ENCODE measurements at regions of chr7 and their contacts with region 1.

Region 1: DNA sequence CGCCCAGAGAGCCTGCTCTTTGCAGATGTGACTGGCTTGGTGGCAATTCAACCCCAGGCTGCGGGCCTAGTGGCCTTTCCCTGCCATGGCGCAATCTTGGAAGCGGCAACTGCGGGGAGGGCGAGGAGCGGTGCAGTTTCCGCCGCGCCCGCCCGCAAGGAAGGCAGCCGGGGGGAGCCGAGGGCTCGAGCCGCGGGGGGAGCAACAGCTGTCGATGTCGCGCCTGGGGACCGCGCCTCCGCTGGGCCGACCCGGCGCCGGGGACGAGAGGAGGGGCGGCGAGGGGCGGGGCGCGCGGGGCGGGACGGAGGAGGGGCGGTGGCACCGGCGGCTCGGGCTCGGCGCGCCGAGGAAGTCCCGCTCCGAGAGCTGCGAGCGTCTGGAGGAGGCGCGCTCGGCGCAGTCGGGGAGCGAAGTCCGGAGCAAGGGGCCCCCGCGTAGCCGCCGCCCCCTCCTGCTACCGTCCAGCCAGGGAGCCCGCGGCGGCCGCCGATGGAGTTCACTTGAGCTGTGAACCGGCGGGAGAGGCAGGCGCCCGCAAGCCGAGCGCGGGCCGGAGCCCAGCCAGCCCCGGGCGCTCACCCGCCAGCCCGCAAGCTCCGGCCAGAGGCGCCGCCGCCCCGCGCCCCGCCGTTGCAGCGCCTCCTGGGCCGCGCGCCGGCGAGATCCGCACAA is 438.1 kb upstream of the GALNT17 start:
- DNase-seq: peak; percentile 96
- H3K4me3 ChIP-seq: peak overlapping the region; percentile 79 to 97
- H3K27ac ChIP-seq: peak overlapping the region in 1 of 2 experiments; percentile 87; a peak in 2 of 4 replicates
- H3K4me1 ChIP-seq: peaks cover 9 to 30% of the 10 kb centered on the region in 2 experiments; a peak in 3 of 4 replicates
- H3K27me3 ChIP-seq: no peaks in the 10 kb centered on the region
- CTCF ChIP-seq: peak; percentile 42
- EP300 ChIP-seq: no peak; a peak in 2 of 4 replicates
- RAD21 ChIP-seq: no peak

Region 2: GRCh38 chr7:70040970-70041766 is 652.7 kb before region 1 on chr7:
- CTCF ChIA-PET with region 1: interaction called, 119 read pairs
- POLR2A ChIA-PET with region 1: no interaction called
- DNase-seq: no peak
- H3K4me3 ChIP-seq: no peak overlapping the region
- H3K27ac ChIP-seq: peak overlapping the region in 1 of 2 experiments; percentile 62; a peak in 1 of 4 replicates
- H3K4me1 ChIP-seq: peaks cover 28 to 55% of the 10 kb centered on the region in 2 experiments
- H3K27me3 ChIP-seq: no peaks in the 10 kb centered on the region
- CTCF ChIP-seq: peak; percentile 78
- EP300 ChIP-seq: no peak
- RAD21 ChIP-seq: peak; percentile 88

Region 3: GRCh38 chr7:70237831-70238575 is 455.8 kb before region 1 on chr7:
- CTCF ChIA-PET with region 1: no interaction called
- POLR2A ChIA-PET with region 1: no interaction called
- DNase-seq: peak; percentile 16
- H3K4me3 ChIP-seq: no peak overlapping the region
- H3K27ac ChIP-seq: peak overlapping the region in 1 of 2 experiments; percentile 50; a peak in 2 of 4 replicates
- H3K4me1 ChIP-seq: peaks cover 0 to 13% of the 10 kb centered on the region in 2 experiments; a peak in 2 of 4 replicates
- H3K27me3 ChIP-seq: no peaks in the 10 kb centered on the region
- CTCF ChIP-seq: no peak
- EP300 ChIP-seq: no peak
- RAD21 ChIP-seq: no peak

Region 4: GRCh38 chr7:70417141-70417655 is 276.6 kb before region 1 on chr7:
- CTCF ChIA-PET with region 1: interaction called, 15 read pairs
- POLR2A ChIA-PET with region 1: no interaction called
- DNase-seq: peak; percentile 41
- H3K4me3 ChIP-seq: no peak overlapping the region
- H3K27ac ChIP-seq: peak overlapping the region in 1 of 2 experiments; percentile 51; a peak in 2 of 4 replicates
- H3K4me1 ChIP-seq: peaks cover 0 to 31% of the 10 kb centered on the region in 2 experiments; a peak in 2 of 4 replicates
- H3K27me3 ChIP-seq: no peaks in the 10 kb centered on the region
- CTCF ChIP-seq: no peak
- EP300 ChIP-seq: no peak
- RAD21 ChIP-seq: peak; percentile 54

Region 5: DNA sequence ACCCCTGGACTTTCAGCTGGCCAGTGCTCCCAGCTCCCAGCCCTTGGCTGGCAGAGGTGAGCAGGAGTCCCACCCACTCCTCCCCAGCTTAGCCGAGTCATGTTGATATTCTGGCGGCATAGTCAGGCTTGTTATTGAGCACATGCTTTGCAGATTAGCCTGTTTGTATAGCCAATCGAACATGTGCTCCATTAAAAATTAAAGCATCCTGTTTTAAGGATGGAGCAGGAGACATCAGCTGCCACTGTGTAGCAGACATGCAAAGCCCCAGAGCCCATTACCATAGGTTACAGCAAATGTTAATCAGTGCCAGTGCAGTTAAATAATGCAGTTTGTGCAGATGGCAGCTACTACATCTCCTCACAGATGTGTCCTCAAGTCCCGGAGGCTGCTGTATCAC is 136.5 kb before region 1 on chr7:
- CTCF ChIA-PET with region 1: interaction called, 14 read pairs
- POLR2A ChIA-PET with region 1: no interaction called
- DNase-seq: peak; percentile 59
- H3K4me3 ChIP-seq: no peak overlapping the region
- H3K27ac ChIP-seq: peak overlapping the region in 1 of 2 experiments; percentile 69; a peak in 2 of 4 replicates
- H3K4me1 ChIP-seq: peaks cover 0 to 20% of the 10 kb centered on the region in 2 experiments; a peak in 1 of 4 replicates
- H3K27me3 ChIP-seq: no peaks in the 10 kb centered on the region
- CTCF ChIP-seq: no peak
- EP300 ChIP-seq: peak in 1 of 2 experiments; percentile 42; a peak in 1 of 4 replicates
- RAD21 ChIP-seq: 0 out of 2 replicates have a peak, but pooled peaks have one; percentile 4

Region 6: GRCh38 chr7:70704831-70705346 is 11.1 kb after region 1 on chr7:
- CTCF ChIA-PET with region 1: interaction called, 40 read pairs
- POLR2A ChIA-PET with region 1: interaction called, 4 read pairs
- DNase-seq: no peak
- H3K4me3 ChIP-seq: no peak overlapping the region
- H3K27ac ChIP-seq: peak overlapping the region; percentile 52 to 69; a peak in 3 of 4 replicates
- H3K4me1 ChIP-seq: peaks cover 23 to 41% of the 10 kb centered on the region in 2 experiments; a peak in 3 of 4 replicates
- H3K27me3 ChIP-seq: no peaks in the 10 kb centered on the region
- CTCF ChIP-seq: no peak
- EP300 ChIP-seq: peak; percentile 46 to 76; a peak in 3 of 4 replicates
- RAD21 ChIP-seq: no peak

Region 7: DNA sequence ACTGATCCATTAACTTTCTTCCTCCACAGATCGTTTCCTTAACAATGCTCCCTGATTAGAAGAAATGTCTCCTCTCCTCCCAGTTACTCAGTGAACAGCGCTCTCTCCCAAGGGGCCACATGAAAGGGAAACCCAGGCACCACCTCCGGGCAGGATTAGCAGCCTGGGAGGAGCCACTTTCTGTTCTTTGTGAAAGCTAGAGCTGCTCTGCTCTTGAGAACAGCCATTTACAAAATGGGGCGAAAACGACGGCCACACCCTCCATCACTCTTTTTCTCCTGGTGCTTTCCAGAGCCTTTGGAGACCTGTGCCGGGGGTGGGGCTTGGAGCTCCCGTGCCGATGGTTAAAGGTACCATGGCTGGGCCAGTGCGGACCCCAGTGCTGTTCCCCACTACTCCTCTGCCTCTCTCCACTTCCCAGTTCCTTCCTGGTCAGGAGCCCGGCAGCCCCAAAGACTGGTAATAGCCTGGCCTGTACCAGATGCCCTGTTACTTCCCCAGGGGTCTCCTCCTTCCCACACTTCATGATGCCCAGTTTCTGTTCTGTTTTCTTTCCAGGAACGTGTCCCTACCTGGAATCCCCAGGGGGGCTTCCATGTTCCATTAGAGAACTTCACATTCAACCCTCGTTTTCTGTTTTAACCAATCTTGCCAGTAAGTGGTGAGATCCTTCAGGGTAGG is 35.2 kb after region 1 on chr7:
- CTCF ChIA-PET with region 1: no interaction called
- POLR2A ChIA-PET with region 1: no interaction called
- DNase-seq: no peak
- H3K4me3 ChIP-seq: no peak overlapping the region
- H3K27ac ChIP-seq: no peak overlapping the region
- H3K4me1 ChIP-seq: peaks cover 2 to 5% of the 10 kb centered on the region in 2 experiments; a peak in 3 of 4 replicates
- H3K27me3 ChIP-seq: no peaks in the 10 kb centered on the region
- CTCF ChIP-seq: no peak
- EP300 ChIP-seq: no peak
- RAD21 ChIP-seq: no peak

Region 8: GRCh38 chr7:70763961-70764691 is 70.3 kb after region 1 on chr7:
- CTCF ChIA-PET with region 1: no interaction called
- POLR2A ChIA-PET with region 1: no interaction called
- DNase-seq: no peak
- H3K4me3 ChIP-seq: no peak overlapping the region
- H3K27ac ChIP-seq: no peak overlapping the region
- H3K4me1 ChIP-seq: peaks cover 0 to 14% of the 10 kb centered on the region in 2 experiments; a peak in 1 of 4 replicates
- H3K27me3 ChIP-seq: no peaks in the 10 kb centered on the region
- CTCF ChIP-seq: no peak
- EP300 ChIP-seq: no peak
- RAD21 ChIP-seq: no peak

Region 9: GRCh38 chr7:70893971-70894715 is 200.3 kb after region 1 on chr7:
- CTCF ChIA-PET with region 1: no interaction called
- POLR2A ChIA-PET with region 1: no interaction called
- DNase-seq: no peak
- H3K4me3 ChIP-seq: no peak overlapping the region
- H3K27ac ChIP-seq: no peak overlapping the region
- H3K4me1 ChIP-seq: no peaks in the 10 kb centered on the region
- H3K27me3 ChIP-seq: no peaks in the 10 kb centered on the region
- CTCF ChIP-seq: no peak
- EP300 ChIP-seq: no peak
- RAD21 ChIP-seq: no peak

Measured in SK-N-SH (cell line).